ENCODE measurements at regions of chr7 and their contacts with region 1.

Region 1: DNA sequence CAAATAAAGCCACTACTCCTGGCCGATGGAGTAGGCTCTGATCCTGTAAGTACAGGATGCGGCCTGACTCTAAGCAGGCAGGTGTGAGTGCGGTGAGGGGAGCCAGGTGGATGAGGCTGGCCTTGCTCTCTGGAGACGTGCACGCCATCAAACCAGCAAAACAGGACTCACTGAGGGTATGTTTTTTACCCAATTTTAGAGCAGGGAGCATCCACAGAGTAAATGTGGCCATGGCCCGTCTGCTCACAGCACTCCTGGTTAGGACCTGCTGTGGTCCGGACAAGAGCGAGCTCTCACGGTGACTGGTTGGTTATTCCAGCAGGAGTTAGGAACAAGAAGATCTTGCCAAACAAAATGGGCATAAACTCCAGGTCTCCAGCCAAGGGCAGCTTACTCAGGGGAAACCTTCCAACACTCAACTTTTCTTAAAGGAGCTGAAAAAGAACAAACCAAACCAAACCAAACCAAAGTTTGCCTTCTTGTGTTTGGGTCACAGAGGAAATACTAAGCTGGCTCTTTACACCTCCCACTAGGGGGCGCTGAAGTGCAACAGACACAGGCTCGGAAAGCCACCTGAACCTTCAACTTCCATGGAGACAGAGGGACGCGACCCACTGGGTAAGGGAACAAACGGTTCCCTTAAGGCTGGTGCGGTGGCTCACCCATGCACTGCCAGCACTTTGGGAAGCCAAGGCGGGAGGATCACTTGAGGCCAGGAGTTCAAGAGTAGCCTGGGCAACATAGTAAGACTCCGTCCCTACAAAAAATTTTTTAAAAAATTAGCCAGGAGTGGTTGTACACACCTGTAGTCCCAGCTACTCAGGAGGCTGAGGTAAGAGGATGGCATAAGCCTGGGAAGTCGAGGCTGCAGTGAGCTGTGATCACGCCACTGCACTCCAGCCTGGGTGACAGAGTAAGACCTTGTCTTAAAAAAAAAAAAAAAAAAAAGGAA is 122.4 kb downstream of the CLEC2L start:
- DNase-seq: peak; percentile 84 to 93 (median 88)
- ATAC-seq: peak; percentile 94
- H3K4me3 ChIP-seq: no peak overlapping the region
- H3K27ac ChIP-seq: no peak overlapping the region
- H3K4me1 ChIP-seq: peaks cover 0 to 3% of the 10 kb centered on the region in 2 experiments; a peak in 2 of 5 replicates
- H3K27me3 ChIP-seq: peaks cover 0 to 3% of the 10 kb centered on the region in 2 experiments; a peak in 1 of 5 replicates
- CTCF ChIP-seq: peak; percentile 93 to 98 (median 98)
- EP300 ChIP-seq: no peak
- POLR2A ChIP-seq: no peak
- RAD21 ChIP-seq: peak; percentile 97 to 98

Region 2: DNA sequence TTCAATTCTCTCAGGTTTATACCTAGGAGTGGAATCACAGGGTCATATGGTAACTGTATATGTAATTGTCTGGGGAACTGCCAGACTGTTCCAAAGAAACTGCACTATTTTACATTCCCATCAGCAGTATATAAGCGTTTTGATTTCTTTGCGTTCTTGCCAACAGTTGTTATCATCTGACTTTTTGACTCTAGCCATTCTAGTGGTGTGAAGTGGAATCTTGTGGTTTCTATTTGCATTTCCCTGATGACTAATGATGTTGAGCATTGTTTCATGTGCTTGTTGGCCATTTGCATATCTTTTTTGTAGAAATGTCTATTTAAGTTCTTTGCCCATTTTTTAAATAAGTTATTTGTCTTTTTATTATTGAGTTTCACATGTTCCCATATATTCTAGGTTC is 492.0 kb before region 1 on chr7:
- CTCF ChIA-PET with region 1: no interaction called
- POLR2A ChIA-PET with region 1: no interaction called
- in situ Hi-C with region 1: no loop called
- intact Hi-C with region 1: no loop called
- DNase-seq: no peak
- ATAC-seq: peak; percentile 61
- H3K4me3 ChIP-seq: no peak overlapping the region
- H3K27ac ChIP-seq: no peak overlapping the region
- H3K4me1 ChIP-seq: no peaks in the 10 kb centered on the region
- H3K27me3 ChIP-seq: no peaks in the 10 kb centered on the region
- CTCF ChIP-seq: no peak
- EP300 ChIP-seq: no peak
- POLR2A ChIP-seq: no peak
- RAD21 ChIP-seq: no peak

Region 3: DNA sequence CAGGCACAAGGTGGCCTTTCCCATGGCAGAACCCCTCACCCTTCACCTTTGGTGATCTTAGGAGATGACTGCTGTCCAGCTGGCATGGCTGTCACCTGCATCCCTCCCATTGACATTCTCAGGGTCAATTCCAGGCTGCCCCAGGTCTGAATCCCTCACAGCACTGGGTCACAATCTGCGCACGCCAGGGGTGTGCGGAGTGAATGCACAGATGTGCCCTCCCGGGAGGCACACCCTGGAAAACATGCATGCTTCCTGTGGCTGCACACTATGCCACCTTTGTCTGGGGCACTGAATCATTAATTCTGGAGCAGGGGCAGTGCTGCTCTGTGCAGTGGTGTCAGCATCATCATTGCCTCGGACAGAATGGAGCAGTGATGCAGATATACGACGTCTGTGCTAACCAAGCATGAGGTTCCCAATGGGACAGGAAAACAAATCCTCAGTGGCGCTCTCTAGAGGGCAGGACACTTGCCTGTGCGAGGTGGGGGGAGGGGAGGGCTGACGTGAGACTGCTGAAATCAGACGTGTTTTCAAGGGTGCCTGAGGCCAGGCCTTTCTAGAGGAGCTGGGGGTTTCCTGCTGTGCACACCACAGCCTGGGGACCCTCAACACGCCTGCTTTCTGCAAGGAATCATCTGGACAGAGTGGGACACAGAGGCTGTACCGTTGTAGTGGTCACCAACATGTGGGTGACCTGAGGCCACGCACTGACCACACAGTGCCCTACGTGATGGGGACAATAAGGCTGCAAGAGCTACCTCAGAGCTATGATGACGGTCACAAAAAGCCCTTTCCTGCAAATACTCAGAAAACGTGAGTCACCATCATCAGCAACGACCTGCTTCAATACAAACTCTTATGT is 54.0 kb after region 1 on chr7:
- CTCF ChIA-PET with region 1: no interaction called
- POLR2A ChIA-PET with region 1: interaction called, 3 read pairs
- in situ Hi-C with region 1: no loop called
- intact Hi-C with region 1: loop called (anchors 2 kb)
- DNase-seq: peak; percentile 49 to 58 (median 56)
- ATAC-seq: peak; percentile 88
- H3K4me3 ChIP-seq: no peak overlapping the region
- H3K27ac ChIP-seq: no peak overlapping the region
- H3K4me1 ChIP-seq: peaks cover 5 to 6% of the 10 kb centered on the region in 2 experiments
- H3K27me3 ChIP-seq: no peaks in the 10 kb centered on the region
- CTCF ChIP-seq: peak; percentile 54 to 73 (median 58)
- EP300 ChIP-seq: no peak
- POLR2A ChIP-seq: no peak
- RAD21 ChIP-seq: peak in 1 of 2 experiments; percentile 51; a peak in 2 of 4 replicates

Region 4: DNA sequence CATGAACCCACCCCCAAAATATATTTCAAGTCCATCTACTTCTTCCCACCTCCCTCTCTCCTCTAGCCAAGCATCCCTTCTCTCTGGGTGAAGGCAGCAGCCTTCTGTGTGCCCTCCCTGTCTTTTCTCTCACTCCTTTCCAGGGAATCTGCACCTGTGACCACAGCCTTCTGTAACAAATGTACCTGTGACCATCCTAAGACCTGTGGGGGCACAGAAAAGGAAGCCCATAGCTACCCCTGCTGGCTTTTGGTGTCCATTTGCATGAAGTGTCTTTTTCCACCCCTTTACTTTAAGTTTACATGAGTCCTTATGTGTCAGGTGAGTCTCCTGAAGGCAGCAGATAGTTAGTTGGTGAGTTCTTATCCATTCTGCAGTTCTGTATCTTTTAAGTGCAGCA is 181.2 kb after region 1 on chr7:
- CTCF ChIA-PET with region 1: no interaction called
- POLR2A ChIA-PET with region 1: no interaction called
- in situ Hi-C with region 1: no loop called
- intact Hi-C with region 1: loop called (anchors 1 kb)
- DNase-seq: peak in 1 of 4 experiments; percentile 30
- ATAC-seq: peak; percentile 25; the same call in 1 of the 3 replicates
- H3K4me3 ChIP-seq: no peak overlapping the region
- H3K27ac ChIP-seq: no peak overlapping the region
- H3K4me1 ChIP-seq: peaks cover 4 to 22% of the 10 kb centered on the region in 2 experiments; a peak in 4 of 5 replicates
- H3K27me3 ChIP-seq: peaks cover 37 to 47% of the 10 kb centered on the region in 2 experiments
- CTCF ChIP-seq: peak; percentile 28 to 41 (median 37); a peak in 3 of 6 replicates
- EP300 ChIP-seq: no peak
- POLR2A ChIP-seq: no peak
- RAD21 ChIP-seq: peak in 1 of 2 experiments; percentile 67; a peak in 2 of 4 replicates